Left ventricle myocardium inferior (tissue), 1 donor: ENCODE measurements at regions of chr10 and their contacts with region 1.

Region 1: DNA sequence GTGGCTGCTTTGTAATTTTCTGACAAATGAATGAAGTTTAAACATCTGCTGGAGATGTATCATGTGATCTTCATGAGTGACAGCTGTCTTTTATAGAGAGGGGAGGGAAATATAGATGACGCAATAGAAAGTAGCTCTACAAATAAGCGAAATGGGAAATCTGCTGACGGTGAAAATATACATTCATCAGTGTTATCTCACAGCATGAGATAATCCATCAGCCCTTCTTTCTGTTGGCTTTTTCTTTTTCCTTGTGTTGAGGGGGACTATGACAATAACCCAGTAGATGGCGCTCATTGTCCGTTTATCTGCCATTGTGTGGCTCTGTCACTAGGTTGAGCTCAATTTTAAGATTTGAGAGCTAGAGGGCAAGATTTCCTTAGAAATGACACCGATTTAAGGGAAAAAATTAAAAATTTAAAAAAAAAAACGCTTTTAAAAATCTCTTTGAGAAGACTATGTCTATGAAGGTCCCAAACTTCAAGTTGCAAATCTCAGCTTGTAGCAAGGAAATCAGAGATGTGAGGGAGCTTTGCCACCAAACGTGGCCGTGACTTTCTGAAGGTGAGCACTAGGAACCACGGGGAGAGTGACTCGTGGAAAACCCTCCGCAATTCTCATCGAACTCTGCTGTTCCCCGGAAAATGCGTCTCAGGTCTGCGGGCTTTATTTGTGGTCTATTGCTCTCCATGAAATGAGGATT is 114.6 kb upstream of the SFMBT2 start:
- DNase-seq: no peak
- H3K4me3 ChIP-seq: no peak overlapping the region
- H3K27ac ChIP-seq: no peak overlapping the region
- H3K4me1 ChIP-seq: no peaks in the 10 kb centered on the region
- H3K27me3 ChIP-seq: peaks cover 62% of the 10 kb centered on the region
- CTCF ChIP-seq: peak; percentile 86

Region 2: GRCh38 chr10:7687228-7687907 is 161.9 kb after region 1 on chr10:
- intact Hi-C with region 1: loop called (anchors 5 kb)
- DNase-seq: peak; percentile 75
- H3K4me3 ChIP-seq: no peak overlapping the region
- H3K27ac ChIP-seq: no peak overlapping the region
- H3K4me1 ChIP-seq: no peaks in the 10 kb centered on the region
- H3K27me3 ChIP-seq: peaks cover 22% of the 10 kb centered on the region
- CTCF ChIP-seq: peak; percentile 92